ENCODE measurements at regions of chr19 and their contacts with region 1.

Region 1: GRCh38 chr19:54137086-54137921 is at the start of gene CNOT3:
- DNase-seq: peak; percentile 97
- CTCF ChIP-seq: no peak

Region 2: GRCh38 chr19:54115109-54116063 is 21.9 kb before region 1 on chr19 and contains the starts of genes PRPF31 and TFPT:
- CTCF ChIA-PET with region 1: interaction called, 5 read pairs
- POLR2A ChIA-PET with region 1: interaction called, 10 read pairs
- DNase-seq: peak; percentile 97
- CTCF ChIP-seq: no peak

Region 3: GRCh38 chr19:54159352-54160181 is 22.3 kb after region 1 on chr19 and contains the start of gene LENG1:
- CTCF ChIA-PET with region 1: interaction called, 12 read pairs
- POLR2A ChIA-PET with region 1: interaction called, 10 read pairs
- DNase-seq: peak; percentile 98
- CTCF ChIP-seq: peak; percentile 20

Region 4: DNA sequence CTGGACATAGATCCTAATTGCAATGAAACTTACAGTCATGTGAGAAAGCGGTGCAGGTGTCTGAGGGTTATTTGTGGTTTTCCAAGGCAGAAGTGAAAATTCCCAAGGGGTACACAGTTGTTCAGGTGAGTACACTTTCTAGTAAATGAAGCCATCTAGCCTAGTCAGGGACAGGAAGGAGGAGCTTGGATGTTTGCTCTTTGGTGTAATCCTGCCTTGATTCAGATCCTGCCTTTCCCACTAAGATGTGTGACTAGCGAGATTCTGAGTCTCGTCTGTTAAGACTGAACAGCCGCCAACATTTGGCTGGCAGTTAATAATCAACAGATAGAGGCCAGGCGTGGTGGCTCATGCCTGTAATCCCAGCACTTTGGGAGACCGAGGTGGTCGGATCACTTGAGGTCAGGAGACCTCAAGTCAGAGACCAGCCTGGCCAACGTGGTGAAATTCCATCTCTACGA is 65.9 kb after region 1 on chr19:
- CTCF ChIA-PET with region 1: no interaction called
- POLR2A ChIA-PET with region 1: interaction called, 18 read pairs
- DNase-seq: no peak
- CTCF ChIP-seq: no peak